Activated CD4-positive, alpha-beta memory T cell treated with anti-CD3 and anti-CD28 coated beads for 36 hours (primary cell): ENCODE measurements at regions of chr13 and their contacts with region 1.

Region 1: GRCh38 chr13:25001476-25002206 is 94.3 kb upstream of the PABPC3 start:
- DNase-seq: no peak
- H3K4me3 Mint-ChIP-seq: no peak overlapping the region
- H3K27ac Mint-ChIP-seq: no peak overlapping the region
- H3K4me1 Mint-ChIP-seq: peaks cover 2% of the 10 kb centered on the region
- H3K27me3 Mint-ChIP-seq: peaks cover 35% of the 10 kb centered on the region

Region 2: GRCh38 chr13:25018729-25019115 is 17.1 kb after region 1 on chr13:
- CTCF ChIA-PET with region 1: interaction called, 10 read pairs
- POLR2A ChIA-PET with region 1: no interaction called
- intact Hi-C with region 1: no loop called
- DNase-seq: peak; percentile 29
- H3K4me3 Mint-ChIP-seq: peak overlapping the region; percentile 29
- H3K27ac Mint-ChIP-seq: no peak overlapping the region
- H3K4me1 Mint-ChIP-seq: peaks cover 9% of the 10 kb centered on the region
- H3K27me3 Mint-ChIP-seq: peaks cover 33% of the 10 kb centered on the region

Region 3: DNA sequence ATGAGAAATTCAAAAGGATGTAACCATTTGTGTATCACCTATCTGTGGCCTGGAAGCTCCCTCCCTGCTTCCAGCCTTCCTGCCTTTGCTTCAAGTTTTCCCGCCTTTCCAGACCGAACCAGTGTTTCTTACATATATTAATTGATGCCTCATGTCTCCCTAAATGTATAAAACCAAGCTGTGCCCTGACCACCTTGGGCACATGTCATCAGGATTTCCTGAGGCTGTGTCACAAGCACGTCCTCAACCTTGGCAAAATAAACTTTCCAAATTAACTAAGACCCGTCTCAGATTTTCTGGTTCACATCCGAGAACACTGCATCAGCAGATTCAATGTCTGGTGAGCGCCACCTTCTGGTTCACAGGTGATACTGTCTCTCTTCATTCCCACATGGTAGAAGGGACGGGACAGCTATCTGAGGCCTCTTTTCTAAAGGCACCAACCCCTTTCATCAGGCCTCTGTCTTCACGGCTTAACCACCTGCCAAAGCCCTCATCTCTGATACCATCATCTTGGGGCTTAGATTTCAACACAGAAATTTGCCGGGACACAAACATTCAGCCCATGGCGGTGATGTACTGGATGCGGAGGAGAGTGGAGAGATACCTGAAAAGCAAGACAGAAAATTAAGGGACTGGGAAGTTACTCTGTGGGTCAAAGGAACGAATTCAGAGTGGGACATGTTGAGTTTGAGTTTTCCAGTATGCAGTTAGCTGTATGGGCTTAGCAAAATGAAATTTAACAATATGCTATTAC is 35.6 kb after region 1 on chr13:
- CTCF ChIA-PET with region 1: interaction called, 13 read pairs
- POLR2A ChIA-PET with region 1: no interaction called
- intact Hi-C with region 1: loop called (anchors 1 kb)
- DNase-seq: peak; percentile 62
- H3K4me3 Mint-ChIP-seq: no peak overlapping the region
- H3K27ac Mint-ChIP-seq: no peak overlapping the region
- H3K4me1 Mint-ChIP-seq: no peaks in the 10 kb centered on the region
- H3K27me3 Mint-ChIP-seq: peaks cover 33% of the 10 kb centered on the region

Region 4: GRCh38 chr13:25114220-25114619 is 112.6 kb after region 1 on chr13:
- CTCF ChIA-PET with region 1: interaction called, 32 read pairs
- POLR2A ChIA-PET with region 1: no interaction called
- intact Hi-C with region 1: loop called (anchors 1 kb)
- DNase-seq: peak; percentile 79
- H3K4me3 Mint-ChIP-seq: no peak overlapping the region
- H3K27ac Mint-ChIP-seq: no peak overlapping the region
- H3K4me1 Mint-ChIP-seq: no peaks in the 10 kb centered on the region
- H3K27me3 Mint-ChIP-seq: peaks cover 19% of the 10 kb centered on the region